Left cardiac atrium (tissue), 4 donors: ENCODE measurements at regions of chr3 and their contacts with region 1.

Region 1: DNA sequence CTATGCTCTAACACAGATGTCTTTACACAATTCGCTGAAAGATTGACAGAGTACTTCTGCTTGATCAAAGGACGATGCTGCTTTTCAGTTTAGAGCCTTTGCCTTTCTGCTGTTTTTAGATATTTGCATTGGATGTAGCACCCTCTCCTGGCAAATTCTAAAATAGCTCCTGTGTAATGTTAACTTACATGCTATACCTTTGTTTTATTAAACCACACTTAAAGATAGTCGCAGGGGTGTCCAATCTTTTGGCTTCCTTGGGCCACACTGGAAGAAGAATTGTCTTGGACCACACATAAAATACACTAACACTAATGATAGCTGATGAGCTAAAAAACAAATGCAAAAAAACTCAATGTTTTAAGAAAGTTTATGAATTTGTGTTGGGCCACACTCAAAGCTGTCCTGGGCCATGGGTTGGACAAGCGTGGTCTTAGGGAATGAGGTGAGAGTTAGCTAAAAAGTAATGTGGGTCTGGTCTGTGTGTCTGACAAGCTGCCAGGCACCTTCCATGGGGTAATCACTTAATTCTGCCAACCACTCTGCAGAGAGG is 62.9 kb downstream of the ATG7 start:
- DNase-seq: no peak
- ATAC-seq: peak; percentile 55 to 72

Region 2: GRCh38 chr3:11060500-11061251 is 274.5 kb before region 1 on chr3:
- intact Hi-C with region 1: loop called (anchors 5 to 10 kb)
- DNase-seq: peak; percentile 78
- ATAC-seq: peak; percentile 79 to 83

Region 3: DNA sequence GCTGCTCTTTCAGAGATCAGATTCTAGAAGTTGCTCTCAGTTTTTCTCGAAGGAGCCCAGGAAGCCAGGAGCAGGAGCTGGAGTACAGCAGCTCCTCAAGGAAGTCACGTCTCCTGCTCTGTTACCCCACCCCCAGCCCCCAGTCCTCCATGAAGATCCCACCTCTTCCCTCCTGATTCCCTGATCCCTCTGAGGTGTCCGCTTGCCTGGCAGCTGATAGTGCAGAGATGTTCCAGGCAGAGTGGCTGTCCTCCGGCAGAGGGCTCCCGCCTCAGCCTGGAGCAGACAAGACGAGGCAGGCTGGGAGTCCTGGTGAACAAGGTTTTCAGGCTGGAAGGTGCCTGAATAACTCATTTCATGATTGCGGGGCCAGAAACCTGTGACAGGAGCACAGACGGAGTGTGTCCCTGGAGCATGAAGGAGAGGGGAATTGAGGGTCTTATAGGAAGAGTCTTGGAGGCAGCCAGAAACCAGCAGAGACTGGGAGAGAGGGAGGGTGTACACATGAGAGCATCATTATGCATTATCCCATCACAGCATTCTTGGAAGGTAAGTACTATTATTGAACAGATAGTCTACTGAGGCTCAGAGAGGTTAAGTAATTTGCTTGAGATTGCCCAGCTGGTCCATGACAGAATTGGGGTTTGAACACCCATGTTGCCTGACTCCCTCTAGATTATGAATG is 179.6 kb before region 1 on chr3:
- intact Hi-C with region 1: loop called in 1 of 2 experiments (anchors 10 kb)
- DNase-seq: peak; percentile 79
- ATAC-seq: peak; percentile 89

Region 4: DNA sequence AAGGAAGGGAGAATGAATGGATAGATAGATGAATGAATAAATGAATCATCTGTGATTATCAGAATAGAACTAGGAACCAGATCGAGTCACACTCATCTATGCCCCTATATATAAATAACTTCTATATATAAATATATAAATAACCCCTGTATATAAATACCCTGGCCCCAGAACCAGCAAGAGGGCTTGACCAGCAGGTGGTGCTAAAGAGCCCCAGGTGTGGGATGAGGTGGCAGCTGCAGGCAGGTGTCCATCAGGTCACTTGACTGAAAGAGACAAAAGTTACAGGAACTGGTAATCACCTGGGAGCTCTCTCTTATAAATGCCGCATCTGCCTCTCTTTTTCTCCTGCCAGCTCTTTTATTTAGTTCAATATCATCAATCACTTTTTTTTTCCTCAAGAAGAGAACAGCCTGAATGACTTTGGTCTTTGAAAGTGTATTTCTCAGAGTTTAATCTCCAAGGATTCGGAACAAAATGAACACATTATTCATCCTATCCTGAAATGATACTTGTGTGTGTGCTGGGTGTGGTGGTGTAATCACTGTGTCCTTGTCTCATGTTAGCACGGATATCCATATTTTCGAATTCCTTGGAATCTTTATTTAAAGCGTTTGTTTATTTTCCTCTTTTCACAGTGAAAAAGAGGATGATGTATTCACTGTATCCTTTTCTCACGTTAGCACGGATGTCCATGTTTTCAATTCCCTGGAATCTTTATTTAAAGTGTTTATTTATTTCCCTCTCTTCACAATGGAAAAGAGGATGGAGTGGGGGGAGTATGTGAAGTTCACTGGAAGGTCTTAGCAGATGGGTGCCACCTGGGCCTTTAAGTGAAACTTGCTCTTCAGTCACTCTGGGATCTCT is 98.3 kb before region 1 on chr3:
- intact Hi-C with region 1: loop called in 1 of 2 experiments (anchors 2 kb)
- DNase-seq: peak; percentile 58
- ATAC-seq: peak in 1 of 2 donors; percentile 38

Region 5: DNA sequence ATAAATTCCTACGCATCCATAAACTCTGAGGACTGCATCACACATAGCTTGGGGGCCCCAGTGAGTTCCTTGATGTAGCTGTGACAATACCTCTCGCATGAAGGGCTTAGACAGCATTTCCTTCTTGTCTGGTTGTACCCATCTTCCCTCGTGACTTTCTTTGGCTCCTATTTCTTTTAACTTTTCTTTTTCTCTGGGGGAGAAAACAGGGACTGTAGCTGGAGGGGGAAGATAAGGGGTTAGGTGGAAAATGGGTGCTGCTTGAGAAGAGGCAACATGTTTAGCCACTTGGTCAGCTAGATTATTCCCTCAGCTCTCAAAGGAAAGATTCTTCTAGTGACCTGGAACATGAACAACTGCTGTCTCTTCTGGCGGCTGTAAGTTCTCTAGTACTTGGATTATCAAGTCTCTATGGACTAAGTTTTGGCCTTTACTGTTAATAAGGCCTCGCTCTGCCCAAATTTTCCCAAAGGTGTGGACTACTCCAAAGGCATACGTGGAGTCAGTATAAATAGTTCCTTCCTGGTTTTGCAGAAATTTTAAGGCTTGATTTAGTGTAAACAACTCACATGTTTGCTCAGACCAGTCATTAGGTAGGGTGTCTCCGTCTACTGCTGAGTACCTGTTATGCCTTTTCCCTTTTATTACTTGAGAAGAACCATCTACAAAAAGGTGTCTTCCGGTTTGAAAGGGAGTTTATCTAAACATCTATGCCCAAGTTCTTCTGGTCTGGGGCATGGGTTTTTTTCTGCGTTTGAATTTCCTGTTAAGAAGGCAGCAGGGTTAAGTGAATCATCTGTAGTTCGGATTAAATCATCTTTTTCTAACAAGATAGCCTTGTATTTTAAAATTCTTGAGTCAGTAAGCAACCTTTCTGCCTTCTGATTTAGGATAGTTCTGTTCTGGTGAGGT is 84.0 kb before region 1 on chr3:
- intact Hi-C with region 1: loop called in 1 of 2 experiments (anchors 10 kb)
- DNase-seq: no peak
- ATAC-seq: no peak